ENCODE measurements at regions of chr1 and their contacts with region 1.

Region 1: GRCh38 chr1:18902523-18903290 is at the start of gene ALDH4A1:
- DNase-seq: peak; percentile 93
- H3K4me3 ChIP-seq: peak within 1 kb of the TSS; percentile 58
- H3K27me3 ChIP-seq: no peaks in the 10 kb centered on the region
- CTCF ChIP-seq: no peak
- polyA plus RNA-seq, gene ALDH4A1: 18.1 and 36.6 TPM in 2 replicates

Region 2: DNA sequence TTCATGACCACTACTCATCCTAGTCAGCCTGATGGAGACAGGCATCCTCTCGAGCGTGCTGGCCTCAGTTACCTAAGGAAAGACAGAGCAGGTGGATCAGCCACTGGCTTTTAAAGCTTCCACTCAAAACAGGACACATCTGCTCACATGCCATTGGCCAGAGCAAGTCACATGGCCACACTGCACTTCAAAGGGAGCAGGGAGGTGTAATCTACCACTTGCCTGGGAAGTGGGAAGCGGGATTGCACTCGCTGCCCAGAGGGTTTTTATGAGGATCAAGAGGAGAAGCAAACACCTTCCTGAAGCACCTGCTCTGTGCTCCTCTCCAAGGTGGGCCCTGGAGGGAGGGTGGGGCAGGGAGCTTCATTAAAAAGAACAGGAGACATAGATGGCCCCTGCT is 151.3 kb before region 1 on chr1:
- CTCF ChIA-PET with region 1: no interaction called
- POLR2A ChIA-PET with region 1: no interaction called
- DNase-seq: no peak
- H3K4me3 ChIP-seq: no peak overlapping the region
- H3K27me3 ChIP-seq: no peaks in the 10 kb centered on the region
- CTCF ChIP-seq: no peak

Region 3: GRCh38 chr1:18883636-18884418 is 18.9 kb before region 1 on chr1:
- CTCF ChIA-PET with region 1: interaction called, 34 read pairs
- POLR2A ChIA-PET with region 1: no interaction called
- DNase-seq: peak; percentile 16
- H3K4me3 ChIP-seq: no peak overlapping the region
- H3K27me3 ChIP-seq: no peaks in the 10 kb centered on the region
- CTCF ChIP-seq: peak; percentile 94

Region 4: GRCh38 chr1:18926315-18927081 is 23.8 kb after region 1 on chr1:
- CTCF ChIA-PET with region 1: interaction called, 10 read pairs
- POLR2A ChIA-PET with region 1: interaction called, 3 read pairs
- DNase-seq: peak; percentile 74
- H3K4me3 ChIP-seq: no peak overlapping the region
- H3K27me3 ChIP-seq: no peaks in the 10 kb centered on the region
- CTCF ChIP-seq: 0 out of 2 replicates have a peak, but pooled peaks have one; percentile 1

Region 5: GRCh38 chr1:18965206-18966173 is 62.8 kb after region 1 on chr1:
- CTCF ChIA-PET with region 1: interaction called, 17 read pairs
- POLR2A ChIA-PET with region 1: no interaction called
- DNase-seq: peak; percentile 62
- H3K4me3 ChIP-seq: no peak overlapping the region
- H3K27me3 ChIP-seq: no peaks in the 10 kb centered on the region
- CTCF ChIP-seq: no peak

Region 6: DNA sequence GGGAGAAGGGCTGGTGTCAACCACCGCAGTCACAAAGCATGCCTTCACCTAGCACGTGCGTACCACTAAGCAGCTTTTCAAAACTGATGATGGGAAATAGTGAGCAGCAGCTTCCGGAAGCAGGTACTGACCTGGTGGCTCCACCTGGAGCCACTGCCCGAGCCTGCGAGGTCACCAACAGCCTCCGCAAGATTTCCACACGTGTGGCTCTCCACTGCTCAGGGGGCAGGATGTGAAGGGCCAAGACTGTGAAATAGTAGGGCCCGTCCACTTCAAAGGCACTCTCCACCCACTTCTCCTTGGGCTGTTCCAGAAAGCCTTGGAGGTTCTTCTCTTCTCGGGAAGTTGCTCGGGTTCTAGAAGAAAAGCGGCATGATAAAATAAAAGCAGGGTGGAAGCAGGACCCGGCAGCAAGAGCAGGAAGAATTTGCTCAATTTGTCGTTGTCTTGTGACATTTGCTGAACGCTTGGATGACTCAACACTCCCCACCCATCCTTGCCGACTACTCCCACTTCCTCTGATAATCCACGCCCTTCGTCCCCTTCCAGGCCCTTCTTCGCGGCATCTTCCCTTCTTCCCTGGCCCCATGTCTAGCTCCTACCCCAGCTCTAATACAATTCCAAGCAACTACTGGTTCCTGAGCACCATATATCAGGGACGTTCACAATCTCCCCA is 178.6 kb after region 1 on chr1:
- CTCF ChIA-PET with region 1: interaction called, 10 read pairs
- POLR2A ChIA-PET with region 1: no interaction called
- DNase-seq: no peak
- H3K4me3 ChIP-seq: no peak overlapping the region
- H3K27me3 ChIP-seq: no peaks in the 10 kb centered on the region
- CTCF ChIP-seq: no peak

Region 7: GRCh38 chr1:19096036-19096833 is 193.5 kb after region 1 on chr1:
- CTCF ChIA-PET with region 1: interaction called, 38 read pairs
- POLR2A ChIA-PET with region 1: no interaction called
- DNase-seq: no peak
- H3K4me3 ChIP-seq: no peak overlapping the region
- H3K27me3 ChIP-seq: no peaks in the 10 kb centered on the region
- CTCF ChIP-seq: peak; percentile 46

Measured in BJ (cell line).